Aorta (tissue), 5 donors: ENCODE measurements at regions of chr17 and their contacts with region 1.

Region 1: DNA sequence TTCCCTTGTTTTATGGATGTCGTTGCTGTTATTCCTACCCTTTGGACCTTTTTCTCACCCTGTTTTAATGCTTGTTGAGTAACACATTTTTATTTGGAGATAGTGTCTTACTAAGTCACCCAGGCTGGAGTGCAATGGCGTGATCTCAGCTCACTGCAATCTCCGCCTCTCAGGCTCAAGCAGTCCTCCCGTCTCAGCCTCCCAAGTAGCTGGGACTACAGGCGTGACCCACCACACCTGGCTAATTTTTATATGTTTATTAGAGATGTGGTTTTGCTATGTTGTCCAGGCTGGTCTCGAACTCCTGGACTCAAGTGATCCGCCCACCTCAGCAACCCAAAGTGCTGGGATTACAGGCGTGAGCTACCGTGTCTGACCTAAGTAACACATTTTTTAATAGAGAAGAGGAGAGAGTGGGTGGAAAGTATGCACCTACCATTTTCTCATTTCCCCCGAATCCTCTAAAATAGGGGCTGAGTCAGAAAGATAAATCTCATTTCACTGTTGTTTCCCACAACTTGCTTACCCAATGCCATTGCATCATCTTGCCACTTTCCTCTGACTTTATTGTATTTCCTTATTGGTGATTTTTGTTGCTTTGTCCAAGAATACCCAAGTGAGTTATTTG is 7.0 kb downstream of the DHX40 start:
- DNase-seq: no peak
- ATAC-seq: no peak
- H3K4me3 ChIP-seq: no peak overlapping the region
- H3K27ac ChIP-seq: no peak overlapping the region
- H3K4me1 ChIP-seq: no peaks in the 10 kb centered on the region
- H3K27me3 ChIP-seq: no peaks in the 10 kb centered on the region

Region 2: GRCh38 chr17:59387351-59388068 is 184.9 kb before region 1 on chr17:
- intact Hi-C with region 1: no loop called
- DNase-seq: no peak
- ATAC-seq: peak; percentile 71
- H3K4me3 ChIP-seq: no peak overlapping the region
- H3K27ac ChIP-seq: peak overlapping the region; percentile 18 to 23
- H3K4me1 ChIP-seq: peaks cover 0 to 6% of the 10 kb centered on the region in 2 donors
- H3K27me3 ChIP-seq: no peaks in the 10 kb centered on the region

Region 3: DNA sequence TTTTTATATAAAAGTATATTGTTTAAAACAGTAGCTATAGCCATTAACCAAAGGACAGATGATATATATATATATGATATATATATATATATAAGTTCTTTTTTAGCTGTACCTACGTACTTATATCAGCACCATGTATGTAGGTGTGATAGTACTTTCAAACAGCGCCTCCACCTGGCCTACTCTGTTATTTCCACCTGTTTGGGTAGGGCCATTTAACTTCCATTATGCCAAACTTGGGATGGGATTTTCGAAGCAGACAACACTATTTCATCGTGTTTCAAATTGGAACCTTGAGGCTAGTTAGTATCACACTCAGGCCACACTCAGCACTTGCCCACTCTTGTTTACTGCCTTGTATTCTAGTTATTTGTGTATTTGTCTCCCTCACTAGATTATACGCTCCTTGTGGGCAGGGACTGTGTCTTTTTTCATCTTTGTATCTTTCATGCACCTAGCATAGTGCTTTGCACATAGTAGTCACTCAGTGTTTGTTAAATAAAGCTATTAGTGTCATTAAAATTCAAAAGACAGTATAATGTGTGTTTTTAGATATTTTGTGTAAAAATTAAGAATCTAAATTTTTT is 35.5 kb after region 1 on chr17:
- intact Hi-C with region 1: loop called in 1 of 2 experiments (anchors 5 kb)
- DNase-seq: no peak
- ATAC-seq: no peak
- H3K4me3 ChIP-seq: no peak overlapping the region
- H3K27ac ChIP-seq: no peak overlapping the region
- H3K4me1 ChIP-seq: no peaks in the 10 kb centered on the region
- H3K27me3 ChIP-seq: no peaks in the 10 kb centered on the region